ENCODE measurements at regions of chr17 and their contacts with region 1.

Region 1: GRCh38 chr17:45235416-45236281 is 14.0 kb downstream of the FMNL1 start:
- H3K4me3 ChIP-seq: no peak overlapping the region
- H3K27ac ChIP-seq: no peak overlapping the region
- H3K4me1 ChIP-seq: no peaks in the 10 kb centered on the region
- CTCF ChIP-seq: peak; percentile 66

Region 2: GRCh38 chr17:45247429-45248131 is 11.9 kb after region 1 on chr17:
- CTCF ChIA-PET with region 1: interaction called, 37 read pairs
- POLR2A ChIA-PET with region 1: interaction called, 4 read pairs
- H3K4me3 ChIP-seq: peak overlapping the region; percentile 67
- H3K27ac ChIP-seq: peak overlapping the region; percentile 80
- H3K4me1 ChIP-seq: peaks cover 2% of the 10 kb centered on the region
- CTCF ChIP-seq: no peak; the same call in 1 of the 2 replicates

Region 3: DNA sequence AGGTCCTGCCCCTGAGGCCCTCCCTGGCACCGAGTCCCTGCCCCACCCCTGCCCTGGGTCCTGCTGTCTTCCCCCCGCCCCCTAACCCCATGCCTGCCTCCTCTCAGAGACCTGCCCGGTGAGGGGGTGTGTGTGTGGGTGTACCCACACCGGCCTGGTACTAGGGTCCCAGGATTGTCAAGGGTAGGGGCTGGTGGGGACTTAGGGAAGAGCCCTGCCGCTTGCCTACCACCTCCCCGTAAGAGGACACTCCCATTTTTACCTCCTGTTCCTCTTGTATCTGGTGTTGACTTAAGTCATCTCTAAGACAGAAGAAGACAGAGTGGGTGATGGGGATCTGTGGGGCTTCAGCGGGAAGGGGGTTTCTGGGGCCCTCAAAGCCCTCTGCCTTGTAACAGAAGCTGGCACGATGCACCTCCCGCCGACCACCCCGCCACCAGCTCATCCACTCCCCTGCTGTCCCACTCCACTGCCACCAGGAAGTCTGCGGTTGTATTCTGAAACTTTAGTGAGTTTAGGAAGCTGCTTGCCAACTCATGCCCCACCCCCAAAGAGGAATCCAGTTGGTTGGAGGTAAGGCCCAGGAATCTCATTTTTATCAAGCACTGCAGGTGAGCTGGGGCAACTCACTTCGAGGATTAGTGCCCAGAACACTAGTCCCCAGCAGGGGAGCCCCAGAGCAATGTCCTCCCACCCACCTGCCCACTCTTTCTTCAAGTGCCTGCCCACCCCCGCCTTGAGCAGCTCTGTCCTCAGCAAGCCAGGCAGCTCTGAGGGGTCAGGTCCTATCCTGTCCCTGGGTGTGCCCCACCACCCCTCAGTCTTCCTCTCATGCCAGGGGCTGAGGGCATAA is 20.7 kb after region 1 on chr17:
- CTCF ChIA-PET with region 1: interaction called, 22 read pairs
- POLR2A ChIA-PET with region 1: no interaction called
- H3K4me3 ChIP-seq: no peak overlapping the region
- H3K27ac ChIP-seq: no peak overlapping the region
- H3K4me1 ChIP-seq: no peaks in the 10 kb centered on the region
- CTCF ChIP-seq: no peak

Region 4: GRCh38 chr17:45261577-45262515 is 26.2 kb after region 1 on chr17 and contains the start of gene SPATA32:
- CTCF ChIA-PET with region 1: interaction called, 22 read pairs
- POLR2A ChIA-PET with region 1: no interaction called
- H3K4me3 ChIP-seq: no peak within 1 kb of the TSS
- H3K27ac ChIP-seq: no peak within 1 kb of the TSS
- H3K4me1 ChIP-seq: no peaks in the 10 kb centered on the region
- CTCF ChIP-seq: no peak

Region 5: GRCh38 chr17:45307290-45308015 is 71.8 kb after region 1 on chr17:
- CTCF ChIA-PET with region 1: interaction called, 12 read pairs
- POLR2A ChIA-PET with region 1: no interaction called
- H3K4me3 ChIP-seq: no peak overlapping the region
- H3K27ac ChIP-seq: peak overlapping the region; percentile 35; the same call in 1 of the 2 replicates
- H3K4me1 ChIP-seq: peaks cover 31% of the 10 kb centered on the region
- CTCF ChIP-seq: no peak